Psoas muscle (tissue), 8 donors: ENCODE measurements at regions of chr10 and their contacts with region 1.

Region 1: GRCh38 chr10:97572214-97572989 is at the start of gene ANKRD2:
- DNase-seq: peak; percentile 87 to 93
- ATAC-seq: peak; percentile 57 to 70 (median 58)
- H3K4me3 ChIP-seq: peak within 1 kb of the TSS; percentile 66
- H3K27ac ChIP-seq: peak within 1 kb of the TSS; percentile 89
- H3K4me1 ChIP-seq: peaks cover 53% of the 10 kb centered on the region
- H3K27me3 ChIP-seq: no peaks in the 10 kb centered on the region
- CTCF ChIP-seq: peak; percentile 84
- total RNA-seq, gene ANKRD2: 1,055 to 3,522 (median 2,378) TPM

Region 2: GRCh38 chr10:97596101-97597062 is 24.0 kb after region 1 on chr10:
- intact Hi-C with region 1: loop called in 1 of 2 experiments (anchors 1 kb)
- DNase-seq: peak; percentile 63 to 81
- ATAC-seq: peak; percentile 78 to 86 (median 84)
- H3K4me3 ChIP-seq: no peak overlapping the region
- H3K27ac ChIP-seq: peak overlapping the region; percentile 91
- H3K4me1 ChIP-seq: peaks cover 63% of the 10 kb centered on the region
- H3K27me3 ChIP-seq: no peaks in the 10 kb centered on the region
- CTCF ChIP-seq: no peak